Posterior cingulate gyrus (tissue), 11 donors: ENCODE measurements at regions of chr7 and their contacts with region 1.

Region 1: DNA sequence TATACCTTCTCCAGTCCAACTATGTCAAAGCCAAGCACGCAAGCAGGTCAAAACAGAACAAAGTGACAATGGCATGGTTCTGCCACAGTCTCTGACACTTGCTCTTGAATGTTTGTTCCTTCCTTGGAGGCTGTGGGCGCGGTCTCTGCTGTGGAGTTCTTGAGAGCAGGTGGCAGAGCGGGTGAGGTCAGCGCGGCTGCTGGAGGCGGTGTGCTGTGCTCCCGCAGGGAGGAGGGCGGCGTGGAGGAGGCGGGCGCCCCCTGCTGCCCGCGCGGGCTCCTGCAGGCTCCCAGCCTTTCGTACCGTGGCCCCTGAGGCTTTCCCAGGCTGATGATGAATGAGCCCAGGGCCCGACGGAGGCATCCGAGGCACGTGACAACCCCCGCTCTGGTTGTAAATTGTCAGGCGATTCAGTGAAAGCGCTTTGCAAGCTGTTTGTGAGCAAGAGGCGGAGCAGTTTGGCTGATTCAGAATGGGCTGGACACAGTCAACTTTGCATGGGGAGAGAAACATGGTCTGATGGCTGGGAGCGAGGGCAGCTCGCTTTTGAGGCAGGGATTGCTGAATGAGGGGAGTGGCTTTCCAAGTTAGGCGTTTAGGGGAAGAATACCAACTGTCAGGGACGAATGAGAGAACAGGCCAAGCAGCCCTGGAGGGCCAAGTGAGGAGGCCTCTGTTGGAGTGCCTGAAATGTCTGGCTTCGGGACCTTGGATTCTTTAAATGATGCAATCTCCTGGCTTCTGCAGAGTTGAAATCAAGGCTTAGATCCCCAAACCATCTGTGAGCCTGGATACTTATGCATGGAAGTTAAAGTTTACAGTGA is 46.6 kb downstream of the CDHR3 start:
- DNase-seq: peak; percentile 71 to 98 (median 80)

Region 2: GRCh38 chr7:105126436-105126975 is 883.1 kb before region 1 on chr7:
- intact Hi-C with region 1: no loop called
- DNase-seq: peak in 1 of 10 donors; percentile 80

Region 3: DNA sequence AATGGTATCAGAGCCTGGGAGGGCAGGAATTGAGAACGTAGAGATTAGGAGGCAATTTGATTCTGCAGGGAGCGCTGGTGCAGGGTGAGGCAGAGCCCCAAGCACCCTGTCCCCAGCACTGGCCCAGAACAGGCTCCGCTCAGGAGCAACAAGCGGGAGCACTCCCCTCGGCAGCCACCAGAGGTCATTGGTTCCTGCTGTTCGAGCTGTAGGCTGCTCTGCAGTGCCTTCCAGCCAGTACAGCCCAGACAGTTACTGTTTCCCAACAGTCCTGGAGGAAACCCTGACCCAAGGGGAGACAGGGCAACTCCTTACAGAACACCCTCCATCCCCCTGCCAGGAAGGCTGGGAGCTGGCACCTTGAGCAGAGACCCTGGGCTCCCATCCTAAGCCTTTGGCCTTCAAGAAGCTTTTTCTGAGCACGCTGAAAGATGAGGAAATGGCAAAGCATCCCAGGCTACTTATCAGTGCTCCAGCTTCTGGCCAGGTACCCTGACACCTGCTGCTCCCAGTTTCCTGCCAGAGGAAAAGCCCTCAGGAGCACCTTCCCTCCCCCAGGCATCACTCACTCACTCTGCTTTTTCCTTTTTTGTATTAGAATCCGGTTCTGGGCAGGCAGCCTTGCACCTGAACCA is 357.1 kb before region 1 on chr7:
- intact Hi-C with region 1: loop called (anchors 5 kb)
- DNase-seq: peak; percentile 71 to 98 (median 86)

Region 4: GRCh38 chr7:105759670-105760550 is 249.7 kb before region 1 on chr7:
- intact Hi-C with region 1: loop called (anchors 1 kb)
- DNase-seq: peak in 5 of 10 donors; percentile 45 to 86 (median 61)

Region 5: DNA sequence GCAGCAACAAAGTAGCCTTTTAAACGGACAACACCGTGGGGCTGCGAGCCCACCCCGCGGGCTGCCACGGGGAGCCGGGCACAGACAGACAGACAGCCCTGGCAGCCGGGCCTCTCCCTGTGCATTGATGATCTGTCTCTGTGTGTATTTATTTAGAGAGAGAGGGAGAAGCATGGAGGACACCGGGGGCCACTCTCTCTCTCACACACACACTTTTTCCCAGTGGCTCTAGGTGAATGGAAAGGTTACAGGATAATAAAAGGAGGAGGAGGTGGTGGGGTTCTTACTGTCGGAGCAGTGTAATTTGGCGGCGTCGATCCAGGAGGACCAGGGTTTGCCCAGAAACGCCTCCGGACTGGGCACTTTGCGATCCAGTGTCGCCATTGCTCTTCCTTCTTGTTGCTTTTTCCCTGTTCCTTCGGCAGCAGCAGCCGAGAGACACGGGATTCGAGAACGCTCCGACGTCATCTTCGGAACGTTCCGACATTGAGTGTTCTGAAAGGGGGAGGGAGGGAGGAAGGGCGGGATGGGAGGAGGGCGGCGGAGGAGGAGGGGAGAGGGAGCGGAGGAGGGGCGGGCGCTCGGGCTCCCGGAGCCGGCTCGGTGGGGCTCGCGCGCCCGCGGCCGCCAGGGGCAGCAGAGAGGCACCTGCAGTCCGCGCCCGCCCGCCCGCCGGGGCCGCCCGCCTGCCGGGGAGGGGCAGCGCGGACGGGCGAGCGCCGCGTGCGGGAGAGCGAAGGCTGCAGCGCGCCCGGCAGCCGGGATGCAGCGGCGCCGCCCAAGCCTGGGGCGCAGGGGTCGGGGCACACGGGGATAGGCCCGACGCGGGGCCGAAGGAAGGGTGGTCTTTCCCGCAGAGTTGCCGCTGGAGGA is 133.3 kb before region 1 on chr7 and contains the start of gene ATXN7L1:
- intact Hi-C with region 1: loop called (anchors 5 kb)
- DNase-seq: peak; percentile 85 to 99 (median 92)